Calu3 (cell line): ENCODE measurements at regions of chr6 and their contacts with region 1.

Region 1: DNA sequence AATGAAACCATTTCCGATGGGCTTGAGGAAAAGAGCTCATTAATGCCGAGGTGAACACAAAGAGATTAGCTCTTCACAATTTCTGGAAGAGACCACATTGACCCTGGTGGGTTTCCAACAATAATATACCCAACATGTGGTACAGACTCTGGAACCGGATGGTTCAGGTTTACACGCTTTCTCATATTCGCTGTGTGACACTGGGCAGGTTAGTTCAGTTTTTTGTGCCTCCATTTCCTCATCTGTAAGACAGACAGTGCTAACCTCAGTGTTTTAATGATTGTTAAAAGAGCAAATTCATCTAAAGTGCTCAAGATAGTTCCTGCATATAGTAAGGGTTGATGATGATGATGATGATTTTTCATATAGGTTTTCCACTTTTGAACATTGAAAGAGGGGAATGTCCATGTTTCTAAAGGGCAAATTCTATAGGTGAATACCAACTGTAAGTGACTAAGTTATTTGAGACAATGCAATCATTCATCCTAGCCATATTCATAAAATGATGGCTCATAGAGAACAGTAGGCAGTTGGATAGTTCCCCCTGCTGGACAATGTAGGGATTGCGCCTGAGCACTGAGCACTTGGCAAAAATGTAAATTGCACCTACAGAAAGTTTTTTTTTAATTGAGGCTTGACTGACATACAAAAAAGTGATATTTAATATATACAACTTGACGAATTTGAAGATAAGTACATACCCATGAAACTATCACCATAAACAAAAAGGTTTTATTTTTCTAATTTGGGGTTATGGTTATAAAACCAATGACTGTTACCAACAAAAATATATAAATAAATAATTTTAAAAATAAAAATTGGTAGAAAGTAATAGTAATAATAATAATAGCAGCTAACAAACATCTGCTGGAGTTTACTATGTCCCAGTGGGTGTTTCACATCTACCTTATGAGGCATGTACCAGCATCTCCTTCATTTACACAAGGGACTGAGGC is 2.1 kb upstream of the PERP start:
- DNase-seq: peak; percentile 73
- H3K4me3 Mint-ChIP-seq: peak overlapping the region; percentile 51
- H3K27ac Mint-ChIP-seq: peak overlapping the region; percentile 93
- H3K4me1 Mint-ChIP-seq: peaks cover 15% of the 10 kb centered on the region
- H3K27me3 Mint-ChIP-seq: no peaks in the 10 kb centered on the region
- CTCF ChIP-seq: peak; percentile 66

Region 2: DNA sequence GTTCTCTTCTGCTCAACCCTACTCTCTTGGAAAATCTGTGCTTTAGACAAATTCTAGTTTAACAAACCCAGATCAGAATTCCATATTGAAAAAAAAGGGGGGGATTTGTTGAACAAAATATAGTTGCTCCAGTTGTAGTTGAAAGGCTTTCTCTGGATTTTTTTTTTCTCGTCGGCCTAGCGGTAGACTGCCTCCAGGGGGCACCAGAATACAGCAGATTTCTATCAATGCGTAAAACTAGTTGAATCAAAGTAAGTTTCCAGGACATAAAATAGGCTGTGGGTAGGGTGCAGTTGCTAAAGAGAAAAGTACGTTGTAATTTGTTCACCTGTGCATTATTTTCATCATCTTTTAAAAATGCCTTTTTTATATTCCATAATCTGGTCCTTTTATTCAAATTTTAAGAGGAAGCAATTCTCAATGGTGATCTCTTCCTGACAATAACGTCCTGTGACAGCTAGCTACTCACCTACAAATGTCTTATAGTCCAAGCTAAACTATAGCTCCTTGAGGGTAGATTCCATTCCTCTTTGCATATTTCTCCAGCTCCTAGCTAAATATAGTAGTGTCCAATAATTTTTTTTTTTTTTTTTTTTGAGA is 107.5 kb before region 1 on chr6:
- CTCF ChIA-PET with region 1: interaction called, 15 read pairs
- intact Hi-C with region 1: loop called (anchors 1 kb)
- DNase-seq: peak; percentile 65
- H3K4me3 Mint-ChIP-seq: no peak overlapping the region
- H3K27ac Mint-ChIP-seq: no peak overlapping the region
- H3K4me1 Mint-ChIP-seq: peaks cover 4% of the 10 kb centered on the region
- H3K27me3 Mint-ChIP-seq: no peaks in the 10 kb centered on the region
- CTCF ChIP-seq: peak; percentile 62

Region 3: DNA sequence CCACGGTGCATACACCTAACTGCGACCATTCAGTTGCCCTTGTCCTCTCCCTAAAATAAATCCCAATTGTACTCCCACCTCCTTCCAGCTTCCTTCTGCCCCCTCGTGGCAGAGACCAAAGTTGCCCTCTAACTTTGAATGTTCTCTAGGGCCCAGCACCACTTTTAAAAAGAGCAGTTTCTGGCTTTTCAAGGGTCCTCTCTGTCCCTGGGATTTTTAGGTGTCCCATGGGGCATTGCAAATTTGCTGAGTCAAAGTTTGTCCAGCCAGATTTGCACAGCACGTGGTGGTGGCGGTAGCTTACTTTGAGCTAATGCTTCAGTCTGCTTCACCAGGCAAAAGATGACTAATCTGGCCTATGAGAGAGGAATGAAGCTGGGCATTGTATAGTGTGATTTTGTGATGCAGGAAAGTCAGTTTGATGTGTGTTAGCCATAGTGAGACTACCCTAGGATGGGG is 102.3 kb before region 1 on chr6:
- CTCF ChIA-PET with region 1: interaction called, 15 read pairs
- intact Hi-C with region 1: no loop called
- DNase-seq: peak; percentile 33
- H3K4me3 Mint-ChIP-seq: no peak overlapping the region
- H3K27ac Mint-ChIP-seq: peak overlapping the region; percentile 58
- H3K4me1 Mint-ChIP-seq: peaks cover 12% of the 10 kb centered on the region
- H3K27me3 Mint-ChIP-seq: no peaks in the 10 kb centered on the region
- CTCF ChIP-seq: peak; percentile 57

Region 4: GRCh38 chr6:138088330-138088766 is 21.0 kb before region 1 on chr6:
- CTCF ChIA-PET with region 1: interaction called, 3 read pairs
- intact Hi-C with region 1: loop called (anchors 2 kb)
- DNase-seq: peak; percentile 68
- H3K4me3 Mint-ChIP-seq: peak overlapping the region; percentile 43
- H3K27ac Mint-ChIP-seq: peak overlapping the region; percentile 92
- H3K4me1 Mint-ChIP-seq: peaks cover 31% of the 10 kb centered on the region
- H3K27me3 Mint-ChIP-seq: no peaks in the 10 kb centered on the region
- CTCF ChIP-seq: no peak

Region 5: DNA sequence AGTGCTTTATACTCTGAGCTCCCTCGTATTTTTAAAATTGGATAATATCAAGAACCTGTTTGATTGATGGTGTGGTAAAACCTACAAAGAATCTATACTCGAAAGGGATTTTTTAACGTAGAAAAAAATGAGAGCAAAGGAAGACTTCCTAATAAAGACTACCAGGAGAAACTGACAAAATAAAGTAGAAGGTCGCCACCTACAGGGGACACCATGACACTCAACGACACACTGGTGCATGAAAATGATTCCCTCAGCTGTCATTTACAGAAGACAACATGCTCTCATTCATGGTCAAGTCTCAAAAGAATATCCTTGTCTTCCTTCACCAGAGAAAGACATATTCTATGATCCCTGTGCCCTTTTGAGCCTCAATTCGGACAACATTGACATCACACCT is 400.1 kb after region 1 on chr6:
- CTCF ChIA-PET with region 1: no interaction called
- intact Hi-C with region 1: loop called (anchors 10 kb)
- DNase-seq: peak; percentile 54
- H3K4me3 Mint-ChIP-seq: no peak overlapping the region
- H3K27ac Mint-ChIP-seq: no peak overlapping the region
- H3K4me1 Mint-ChIP-seq: peaks cover 32% of the 10 kb centered on the region
- H3K27me3 Mint-ChIP-seq: no peaks in the 10 kb centered on the region
- CTCF ChIP-seq: peak; percentile 20